Lower lobe of right lung (tissue), 2 donors: ENCODE measurements at regions of chr10 and their contacts with region 1.

Region 1: DNA sequence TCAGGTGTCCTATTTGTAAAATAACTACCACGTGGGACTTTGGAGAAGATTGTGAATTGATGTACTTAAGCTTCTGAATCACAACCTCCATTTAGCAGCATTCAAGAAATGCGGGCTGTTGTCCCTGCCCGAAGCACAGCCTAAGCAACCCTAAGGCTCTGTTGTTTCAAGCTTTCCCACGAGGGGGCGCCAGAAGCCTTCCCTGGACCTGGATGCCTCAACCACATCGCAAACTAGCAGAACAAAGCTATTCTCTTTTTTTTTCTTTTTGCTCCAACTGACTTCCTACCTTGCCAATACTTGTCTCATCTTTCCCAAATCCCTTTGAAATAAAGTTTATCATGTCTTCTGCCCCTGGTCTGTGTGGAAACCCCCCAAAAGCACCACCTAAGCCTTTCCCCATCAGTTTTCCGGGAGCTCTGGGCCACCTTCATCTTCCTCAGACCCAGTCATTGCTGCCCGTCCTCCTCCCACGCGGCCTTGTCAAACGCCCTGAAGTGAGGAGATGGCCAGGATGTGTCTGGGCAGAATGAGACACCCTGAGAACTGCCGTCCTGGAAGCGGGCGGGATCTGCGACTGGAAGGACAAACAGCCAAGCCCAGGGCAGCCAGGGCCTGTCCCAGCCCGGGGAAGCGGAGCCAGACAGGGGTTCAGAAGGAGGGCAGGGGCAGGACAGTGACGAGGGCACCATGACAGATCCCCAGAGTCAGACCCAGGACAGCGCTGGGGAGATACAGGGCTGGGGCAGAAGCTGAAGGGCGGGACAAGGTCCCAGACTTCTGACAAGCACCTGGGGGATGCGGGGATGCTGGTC is 112.7 kb downstream of the SLIT1 start:
- DNase-seq: peak; percentile 80
- ATAC-seq: peak; percentile 67 to 84
- H3K4me3 ChIP-seq: no peak overlapping the region
- H3K27ac ChIP-seq: no peak overlapping the region
- H3K4me1 ChIP-seq: no peaks in the 10 kb centered on the region
- H3K27me3 ChIP-seq: peaks cover 25% of the 10 kb centered on the region
- CTCF ChIP-seq: peak; percentile 92

Region 2: GRCh38 chr10:97196223-97197029 is 123.4 kb after region 1 on chr10:
- intact Hi-C with region 1: loop called (anchors 10 kb)
- DNase-seq: peak; percentile 56
- ATAC-seq: peak; percentile 85 to 88
- H3K4me3 ChIP-seq: peak overlapping the region; percentile 59
- H3K27ac ChIP-seq: no peak overlapping the region
- H3K4me1 ChIP-seq: peaks cover 9% of the 10 kb centered on the region
- H3K27me3 ChIP-seq: peaks cover 32% of the 10 kb centered on the region
- CTCF ChIP-seq: peak; percentile 72